ENCODE measurements at regions of chr3 and their contacts with region 1.

Region 1: GRCh38 chr3:151660885-151661284 is 72.8 kb upstream of the AADACL2 start:
- DNase-seq: no peak
- ATAC-seq: no peak
- H3K4me3 ChIP-seq: no peak overlapping the region
- H3K27ac ChIP-seq: no peak overlapping the region
- H3K4me1 ChIP-seq: no peaks in the 10 kb centered on the region
- H3K27me3 ChIP-seq: no peaks in the 10 kb centered on the region; the same call in 1 of the 2 replicates
- CTCF ChIP-seq: 0 out of 2 replicates have a peak, but pooled peaks have one; percentile 22
- POLR2A ChIP-seq: no peak
- RAD21 ChIP-seq: no peak

Region 2: DNA sequence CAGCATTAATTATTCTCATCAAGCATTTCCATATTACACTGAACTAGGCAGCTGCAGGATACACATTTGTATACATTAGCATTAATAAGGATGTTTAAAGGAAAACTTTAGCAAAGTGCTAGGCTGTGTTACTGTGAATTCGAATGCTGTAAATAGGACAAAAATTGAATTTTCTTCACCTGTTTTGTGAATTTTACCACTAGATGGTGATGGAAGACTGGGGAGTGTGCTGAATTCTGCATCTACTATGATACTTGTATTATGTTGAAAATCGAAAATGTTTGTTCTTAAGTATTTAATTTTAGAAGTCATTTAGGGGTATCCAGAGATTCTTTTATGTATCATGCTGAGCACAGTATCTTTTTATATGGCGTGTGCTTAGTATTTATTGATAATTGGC is 370.2 kb before region 1 on chr3:
- CTCF ChIA-PET with region 1: no interaction called
- POLR2A ChIA-PET with region 1: no interaction called
- dilution Hi-C with region 1: no loop called
- in situ Hi-C with region 1: no loop called
- intact Hi-C with region 1: loop called (anchors 2 kb)
- DNase-seq: peak; percentile 66
- ATAC-seq: peak; percentile 72
- H3K4me3 ChIP-seq: no peak overlapping the region
- H3K27ac ChIP-seq: no peak overlapping the region
- H3K4me1 ChIP-seq: no peaks in the 10 kb centered on the region
- H3K27me3 ChIP-seq: no peaks in the 10 kb centered on the region
- CTCF ChIP-seq: peak; percentile 87
- POLR2A ChIP-seq: no peak
- RAD21 ChIP-seq: peak; percentile 93

Region 3: GRCh38 chr3:151301787-151302186 is 359.1 kb before region 1 on chr3:
- CTCF ChIA-PET with region 1: no interaction called
- POLR2A ChIA-PET with region 1: no interaction called
- dilution Hi-C with region 1: no loop called
- in situ Hi-C with region 1: no loop called
- intact Hi-C with region 1: loop called (anchors 5 kb)
- DNase-seq: peak; percentile 91
- ATAC-seq: peak; percentile 73
- H3K4me3 ChIP-seq: no peak overlapping the region
- H3K27ac ChIP-seq: peak overlapping the region; percentile 35; the same call in 1 of the 2 replicates
- H3K4me1 ChIP-seq: peaks cover 12% of the 10 kb centered on the region
- H3K27me3 ChIP-seq: no peaks in the 10 kb centered on the region
- CTCF ChIP-seq: no peak
- POLR2A ChIP-seq: no peak
- RAD21 ChIP-seq: no peak

Region 4: DNA sequence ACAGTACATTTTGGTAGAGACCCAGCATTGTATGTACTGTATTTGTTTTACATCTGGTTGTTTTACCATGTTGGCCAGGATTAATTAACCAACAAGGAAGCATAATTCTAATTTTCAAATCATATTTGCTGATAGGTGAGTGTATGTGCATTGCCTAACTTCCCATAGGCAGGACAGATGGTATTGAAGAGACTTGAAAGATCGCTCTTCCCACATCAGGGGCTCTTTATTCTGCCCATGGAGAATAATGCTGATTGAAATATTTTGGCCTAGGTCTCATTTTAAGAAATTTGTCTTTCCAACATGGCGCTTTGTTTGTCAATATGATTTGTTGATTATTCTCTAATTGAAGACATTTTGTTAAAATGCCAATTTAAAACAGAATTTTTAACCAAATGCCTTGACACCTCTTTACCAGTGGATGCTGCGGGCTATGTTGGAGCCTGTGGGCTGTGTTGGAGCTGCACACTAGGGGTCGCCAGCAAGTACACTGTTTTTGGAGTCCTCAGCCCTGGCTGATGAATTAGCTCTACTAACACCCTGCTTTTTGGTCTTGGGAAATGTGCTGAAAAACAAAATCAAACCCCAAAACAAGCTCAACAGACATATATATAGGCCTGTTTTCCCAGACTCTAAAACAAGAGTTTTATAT is 281.7 kb before region 1 on chr3:
- CTCF ChIA-PET with region 1: no interaction called
- POLR2A ChIA-PET with region 1: no interaction called
- dilution Hi-C with region 1: no loop called
- in situ Hi-C with region 1: no loop called
- intact Hi-C with region 1: no loop called
- DNase-seq: no peak
- ATAC-seq: peak; percentile 64
- H3K4me3 ChIP-seq: no peak overlapping the region
- H3K27ac ChIP-seq: no peak overlapping the region
- H3K4me1 ChIP-seq: no peaks in the 10 kb centered on the region
- H3K27me3 ChIP-seq: no peaks in the 10 kb centered on the region
- CTCF ChIP-seq: peak; percentile 50
- POLR2A ChIP-seq: no peak
- RAD21 ChIP-seq: peak; percentile 34

Region 5: DNA sequence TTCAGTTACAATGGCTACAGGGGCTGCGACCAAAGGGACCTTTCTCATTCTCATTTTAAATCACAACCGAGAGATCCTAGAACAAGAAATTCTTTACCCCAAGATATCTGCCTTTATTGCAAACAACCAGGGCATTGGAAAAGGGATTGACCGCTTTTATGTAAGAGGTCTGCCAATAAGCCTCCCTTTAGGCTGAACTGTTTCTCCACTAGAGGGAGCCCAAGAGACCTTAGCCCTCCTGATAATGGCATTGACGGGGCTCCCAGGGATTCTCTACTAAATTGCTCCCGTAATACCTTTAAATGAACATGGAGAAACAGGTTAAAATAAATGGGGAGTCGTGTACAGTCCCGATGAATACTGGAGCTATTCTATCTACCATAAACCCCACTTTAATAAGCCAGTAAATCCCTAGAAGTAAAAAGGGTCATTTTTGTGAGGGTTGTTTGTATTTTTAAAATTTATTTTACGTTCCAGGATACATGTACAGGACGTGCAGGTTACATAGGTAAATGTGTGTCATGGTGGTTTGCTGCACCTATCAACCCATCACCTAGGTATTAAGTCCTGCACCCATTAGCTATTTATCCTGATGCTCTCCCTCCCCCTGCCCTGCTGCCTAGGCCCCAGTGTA is 192.5 kb before region 1 on chr3:
- CTCF ChIA-PET with region 1: no interaction called
- POLR2A ChIA-PET with region 1: no interaction called
- dilution Hi-C with region 1: no loop called
- in situ Hi-C with region 1: no loop called
- intact Hi-C with region 1: loop called (anchors 1 kb)
- DNase-seq: peak; percentile 62
- ATAC-seq: peak; percentile 83
- H3K4me3 ChIP-seq: no peak overlapping the region
- H3K27ac ChIP-seq: no peak overlapping the region
- H3K4me1 ChIP-seq: no peaks in the 10 kb centered on the region
- H3K27me3 ChIP-seq: no peaks in the 10 kb centered on the region; the same call in 1 of the 2 replicates
- CTCF ChIP-seq: peak; percentile 76
- POLR2A ChIP-seq: no peak
- RAD21 ChIP-seq: peak; percentile 68

Region 6: GRCh38 chr3:152646004-152646403 is 985.1 kb after region 1 on chr3:
- CTCF ChIA-PET with region 1: no interaction called
- POLR2A ChIA-PET with region 1: no interaction called
- dilution Hi-C with region 1: no loop called
- in situ Hi-C with region 1: no loop called
- intact Hi-C with region 1: no loop called
- DNase-seq: no peak
- ATAC-seq: no peak
- H3K4me3 ChIP-seq: no peak overlapping the region
- H3K27ac ChIP-seq: no peak overlapping the region
- H3K4me1 ChIP-seq: no peaks in the 10 kb centered on the region
- H3K27me3 ChIP-seq: no peaks in the 10 kb centered on the region; the same call in 1 of the 2 replicates
- CTCF ChIP-seq: no peak
- POLR2A ChIP-seq: no peak
- RAD21 ChIP-seq: no peak

Measured in IMR-90 (cell line).